Right lobe of liver (tissue), 6 donors: ENCODE measurements at regions of chr1 and their contacts with region 1.

Region 1: GRCh38 chr1:206489980-206490770 is 17.2 kb upstream of the RASSF5 start:
- DNase-seq: peak; percentile 77 to 82 (median 82)
- ATAC-seq: peak; percentile 93 to 97 (median 95)
- H3K4me3 ChIP-seq: no peak overlapping the region
- H3K27ac ChIP-seq: no peak overlapping the region
- H3K4me1 ChIP-seq: peaks cover 0 to 2% (median 0%) of the 10 kb centered on the region in 4 donors
- H3K27me3 ChIP-seq: no peaks in the 10 kb centered on the region
- CTCF ChIP-seq: peak; percentile 91 to 99 (median 97)
- POLR2A ChIP-seq: no peak

Region 2: DNA sequence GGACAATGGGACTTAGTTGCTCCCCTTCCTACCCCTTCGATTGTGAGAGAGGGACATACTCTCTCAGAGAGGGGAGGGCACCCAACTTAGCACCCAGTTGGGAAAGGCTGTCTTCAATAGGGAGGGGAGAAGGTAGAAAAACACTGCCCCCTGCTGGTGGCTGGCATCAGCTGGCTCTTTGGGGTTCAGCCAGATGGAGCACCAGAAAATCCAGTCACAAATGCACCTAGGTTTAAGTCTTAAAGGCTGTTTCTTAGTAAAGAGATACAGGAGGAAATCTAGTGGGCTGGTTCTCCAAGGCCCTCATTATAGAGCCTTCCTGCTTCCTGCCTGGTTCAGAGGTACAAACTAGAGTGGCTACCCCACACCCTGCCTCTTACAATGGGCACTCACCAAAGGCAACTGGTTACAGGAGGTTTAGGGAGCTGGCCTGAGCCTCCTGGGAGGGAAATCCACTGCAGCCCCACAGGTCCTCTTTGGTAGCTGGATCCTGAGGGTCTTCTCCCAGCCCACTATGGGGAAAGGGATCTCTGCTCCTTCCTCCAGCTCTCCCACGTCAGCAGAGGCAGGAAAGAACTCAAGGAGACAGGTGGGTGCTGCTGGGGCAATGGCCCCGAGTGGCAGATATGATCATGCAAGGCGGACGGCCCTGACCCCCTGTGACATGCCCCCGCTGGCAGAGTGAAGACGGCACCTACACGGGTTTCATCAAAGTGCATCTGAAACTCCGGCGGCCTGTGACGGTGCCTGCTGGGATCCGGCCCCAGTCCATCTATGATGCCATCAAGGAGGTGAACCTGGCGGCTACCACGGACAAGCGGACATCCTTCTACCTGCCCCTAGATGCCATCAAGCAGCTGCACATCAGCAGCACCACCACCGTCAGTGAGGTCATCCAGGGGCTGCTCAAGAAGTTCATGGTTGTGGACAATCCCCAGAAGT is 93.8 kb after region 1 on chr1:
- intact Hi-C with region 1: loop called (anchors 5 kb)
- DNase-seq: peak; percentile 71 to 82 (median 72)
- ATAC-seq: peak; percentile 55 to 74 (median 70)
- H3K4me3 ChIP-seq: no peak overlapping the region
- H3K27ac ChIP-seq: no peak overlapping the region
- H3K4me1 ChIP-seq: no peaks in the 10 kb centered on the region
- H3K27me3 ChIP-seq: no peaks in the 10 kb centered on the region
- CTCF ChIP-seq: peak; percentile 89 to 93 (median 91)
- POLR2A ChIP-seq: no peak

Region 3: DNA sequence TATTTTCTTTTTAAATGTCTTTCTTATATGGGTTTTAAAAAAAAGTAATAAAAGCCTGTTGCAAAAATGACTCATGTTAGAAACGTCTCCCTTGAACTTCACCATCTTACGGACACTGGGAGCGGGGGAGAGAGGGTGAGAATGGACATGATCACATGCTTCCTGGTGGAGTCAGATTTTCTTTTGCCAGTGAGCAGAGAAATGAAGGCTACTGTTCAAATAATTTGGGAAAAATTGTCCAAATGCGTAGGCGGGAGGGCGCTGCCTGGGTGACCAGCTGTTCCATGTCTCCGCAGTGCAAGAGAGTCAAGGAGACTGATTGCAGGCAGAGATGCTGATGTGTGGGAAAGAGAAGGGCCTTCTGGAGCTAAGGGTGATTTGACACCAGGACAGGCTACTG is 99.0 kb after region 1 on chr1:
- intact Hi-C with region 1: loop called (anchors 5 kb)
- DNase-seq: no peak
- ATAC-seq: peak in 1 of 4 donors; percentile 26
- H3K4me3 ChIP-seq: no peak overlapping the region
- H3K27ac ChIP-seq: no peak overlapping the region
- H3K4me1 ChIP-seq: no peaks in the 10 kb centered on the region
- H3K27me3 ChIP-seq: no peaks in the 10 kb centered on the region
- CTCF ChIP-seq: no peak
- POLR2A ChIP-seq: no peak